MCF 10A (cell line): ENCODE measurements at regions of chr12 and their contacts with region 1.

Region 1: DNA sequence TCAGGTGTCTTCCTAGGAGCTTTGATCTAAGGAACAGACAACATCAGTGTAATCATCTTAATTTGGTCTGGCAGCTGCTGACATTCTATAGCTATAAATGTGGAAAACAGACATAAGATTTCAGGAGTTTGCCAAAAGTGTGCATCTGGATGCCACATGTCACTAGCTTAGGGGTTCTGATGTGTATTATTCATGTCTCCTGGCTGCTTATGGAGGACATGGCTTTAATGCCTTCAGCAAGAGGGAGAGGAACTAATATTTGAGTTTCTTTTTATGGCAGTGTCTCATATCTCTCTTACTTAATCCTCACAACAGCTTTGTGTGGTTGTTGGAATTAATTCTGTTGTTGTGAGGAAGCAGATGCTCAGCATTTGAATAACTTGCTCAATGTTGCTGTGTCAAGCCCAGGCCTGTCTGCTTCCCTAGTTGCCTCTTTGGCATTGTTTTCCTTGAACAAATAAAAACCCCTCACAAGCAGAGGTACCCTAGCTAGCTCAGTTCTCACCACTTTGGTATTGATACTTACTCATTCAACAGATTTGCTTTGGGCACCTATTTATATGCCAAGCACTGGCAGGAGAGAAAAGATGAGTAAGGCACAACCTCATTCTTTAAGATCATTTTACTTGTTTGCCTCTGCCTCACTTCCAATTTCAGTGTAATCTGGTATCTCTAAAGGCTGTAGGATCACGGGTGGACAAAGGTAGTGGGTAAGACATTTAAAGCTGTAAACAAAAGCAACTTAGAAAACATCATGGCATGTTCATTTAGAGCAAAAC is 39.8 kb upstream of the EID3 start:
- DNase-seq: peak; percentile 77
- H3K4me3 Mint-ChIP-seq: no peak overlapping the region
- H3K27ac Mint-ChIP-seq: peak overlapping the region; percentile 95
- H3K4me1 Mint-ChIP-seq: peaks cover 18% of the 10 kb centered on the region
- H3K27me3 Mint-ChIP-seq: no peaks in the 10 kb centered on the region
- CTCF ChIP-seq: no peak

Region 2: GRCh38 chr12:104276273-104277131 is 12.7 kb after region 1 on chr12:
- CTCF ChIA-PET with region 1: interaction called, 10 read pairs
- POLR2A ChIA-PET with region 1: interaction called, 19 read pairs
- intact Hi-C with region 1: no loop called
- DNase-seq: no peak
- H3K4me3 Mint-ChIP-seq: peak overlapping the region; percentile 27
- H3K27ac Mint-ChIP-seq: peak overlapping the region; percentile 69
- H3K4me1 Mint-ChIP-seq: peaks cover 40% of the 10 kb centered on the region
- H3K27me3 Mint-ChIP-seq: no peaks in the 10 kb centered on the region
- CTCF ChIP-seq: no peak